Activated B cell treated with CpG ODN at 0.5 μM for 24 hours (primary cell): ENCODE measurements at regions of chrX and their contacts with region 1.

Region 1: DNA sequence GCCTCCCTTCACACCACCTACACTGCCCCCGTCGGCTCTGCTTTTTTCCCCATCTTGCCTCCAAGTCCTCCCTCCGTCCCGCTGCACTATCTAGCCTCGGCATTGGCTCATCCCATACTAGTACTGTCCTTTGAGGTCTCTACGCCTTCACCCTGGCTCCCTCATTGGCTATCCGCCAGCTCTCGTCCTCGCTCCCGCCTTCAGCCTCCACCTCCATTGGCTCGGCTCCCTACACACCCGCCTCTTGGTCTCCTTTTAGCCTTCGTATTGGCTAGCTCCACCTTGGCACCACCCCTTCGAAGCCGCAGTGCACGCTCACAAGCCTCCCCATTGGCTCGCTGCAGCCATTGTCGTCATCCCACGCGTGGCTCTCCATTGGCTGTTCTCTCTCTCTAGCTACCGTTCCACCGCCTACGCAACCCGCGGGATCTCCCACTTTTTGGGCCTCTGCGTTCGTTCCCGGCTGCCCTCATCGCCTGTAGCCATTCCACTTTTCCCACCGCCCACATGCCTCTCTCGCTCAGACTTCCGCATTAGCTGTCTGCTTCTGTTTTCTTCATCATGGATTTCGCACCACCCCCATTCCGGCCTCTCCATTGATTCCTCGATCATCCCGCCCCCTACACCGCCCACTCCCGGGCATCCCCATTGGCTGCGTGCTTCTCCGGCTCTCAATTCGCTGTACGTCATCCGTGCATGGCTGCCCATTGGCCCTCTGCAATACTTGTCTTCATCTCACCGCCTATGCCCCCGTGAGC is 404 bp upstream of the PPP1R3F start:
- DNase-seq: peak; percentile 76
- ATAC-seq: peak; percentile 86
- H3K4me3 Mint-ChIP-seq: peak overlapping the region; percentile 93
- H3K27ac Mint-ChIP-seq: peak overlapping the region; percentile 99
- H3K4me1 Mint-ChIP-seq: peaks cover 38% of the 10 kb centered on the region
- H3K27me3 Mint-ChIP-seq: no peaks in the 10 kb centered on the region
- CTCF ChIP-seq: no peak

Region 2: DNA sequence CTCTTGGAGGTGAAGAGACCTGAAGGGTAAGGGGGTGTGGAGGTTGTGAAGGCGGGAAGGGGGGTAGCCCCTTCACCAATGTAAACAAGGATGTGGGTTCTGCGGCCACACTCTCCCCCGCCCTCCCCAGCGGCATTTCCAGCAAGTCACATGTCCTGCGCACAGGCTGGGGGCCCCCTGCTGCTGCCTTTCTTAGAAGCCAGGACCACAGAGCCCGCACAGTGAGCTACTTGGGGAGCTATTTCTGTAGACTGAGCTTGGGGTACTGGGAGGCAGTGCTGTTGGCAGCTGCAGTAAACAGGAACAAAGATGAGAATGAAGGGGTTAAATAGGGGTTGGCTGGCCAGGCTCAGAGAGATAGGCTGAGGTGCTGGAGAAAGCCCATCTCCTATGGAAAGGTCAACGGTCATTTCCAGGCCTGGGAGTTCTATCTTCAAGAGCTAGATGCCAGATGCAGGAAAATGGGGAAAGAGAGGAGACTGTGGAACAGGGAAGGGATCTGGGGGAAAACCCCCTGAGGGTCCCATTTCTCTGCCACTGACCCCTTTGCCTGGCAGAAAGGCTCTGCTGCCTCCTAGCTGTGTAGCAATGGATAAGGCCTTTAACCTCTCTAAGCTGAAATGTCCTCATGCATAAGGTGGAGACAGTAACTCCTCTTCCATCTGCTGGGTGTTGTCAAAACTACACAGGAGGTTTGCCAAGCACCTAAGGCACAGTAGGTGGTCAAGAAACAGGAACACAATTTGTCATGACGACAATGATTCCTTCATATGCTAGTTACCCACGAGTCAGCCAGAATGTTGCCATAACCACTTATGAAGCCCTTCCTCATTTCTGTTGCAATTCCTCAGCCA is 331.9 kb before region 1 on chrX:
- CTCF ChIA-PET with region 1: no interaction called
- POLR2A ChIA-PET with region 1: no interaction called
- intact Hi-C with region 1: loop called (anchors 1 kb)
- DNase-seq: peak; percentile 68
- ATAC-seq: peak; percentile 54
- H3K4me3 Mint-ChIP-seq: peak overlapping the region; percentile 77
- H3K27ac Mint-ChIP-seq: peak overlapping the region; percentile 98
- H3K4me1 Mint-ChIP-seq: peaks cover 87% of the 10 kb centered on the region
- H3K27me3 Mint-ChIP-seq: no peaks in the 10 kb centered on the region
- CTCF ChIP-seq: no peak

Region 3: DNA sequence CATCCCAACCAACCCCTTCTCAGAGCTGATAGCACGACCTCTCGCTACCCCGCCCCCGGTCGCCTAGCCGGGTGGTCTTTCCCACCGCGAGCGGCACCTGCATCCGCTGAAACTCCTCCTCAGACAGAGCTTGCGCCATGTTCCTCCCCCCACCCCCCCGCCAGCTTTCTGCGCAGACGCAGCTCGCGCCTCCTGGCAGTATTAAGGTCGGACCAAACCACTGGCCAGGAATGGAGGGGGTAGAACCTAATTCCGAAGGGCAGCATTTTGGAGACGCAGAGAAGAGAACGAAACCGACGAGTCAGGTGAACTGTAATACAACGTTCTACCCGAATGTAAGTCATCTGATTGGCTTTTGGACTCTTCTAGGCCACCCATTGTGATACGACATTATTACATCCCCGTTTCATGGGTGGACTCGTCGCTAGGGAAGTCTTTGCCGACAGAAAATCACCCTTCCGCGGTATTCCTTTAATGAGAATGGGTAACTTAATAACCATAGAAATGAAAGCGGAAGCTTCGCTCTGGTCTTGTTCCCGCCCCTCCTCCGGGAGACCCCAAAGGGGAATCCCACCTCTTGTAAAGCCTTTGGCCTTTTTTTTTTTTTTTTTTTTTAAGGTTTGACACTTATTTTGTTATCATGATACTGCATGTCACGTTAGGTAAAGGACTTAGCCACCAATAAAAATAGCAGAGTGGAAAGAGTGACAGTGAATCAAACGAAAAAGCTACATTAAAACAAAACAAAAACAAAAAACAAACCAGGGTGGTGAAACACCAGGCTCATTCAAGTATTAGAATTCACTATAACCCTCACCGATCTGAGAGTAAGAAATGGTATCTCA is 266.9 kb before region 1 on chrX and contains the start of gene GRIPAP1:
- CTCF ChIA-PET with region 1: no interaction called
- POLR2A ChIA-PET with region 1: no interaction called
- intact Hi-C with region 1: loop called (anchors 1 kb)
- DNase-seq: peak; percentile 52
- ATAC-seq: peak; percentile 88
- H3K4me3 Mint-ChIP-seq: peak within 1 kb of the TSS; percentile 99
- H3K27ac Mint-ChIP-seq: peak within 1 kb of the TSS; percentile 97
- H3K4me1 Mint-ChIP-seq: peaks cover 24% of the 10 kb centered on the region
- H3K27me3 Mint-ChIP-seq: no peaks in the 10 kb centered on the region
- CTCF ChIP-seq: no peak
- total RNA-seq, gene GRIPAP1: 97.3 and 117 TPM in 2 replicates

Region 4: DNA sequence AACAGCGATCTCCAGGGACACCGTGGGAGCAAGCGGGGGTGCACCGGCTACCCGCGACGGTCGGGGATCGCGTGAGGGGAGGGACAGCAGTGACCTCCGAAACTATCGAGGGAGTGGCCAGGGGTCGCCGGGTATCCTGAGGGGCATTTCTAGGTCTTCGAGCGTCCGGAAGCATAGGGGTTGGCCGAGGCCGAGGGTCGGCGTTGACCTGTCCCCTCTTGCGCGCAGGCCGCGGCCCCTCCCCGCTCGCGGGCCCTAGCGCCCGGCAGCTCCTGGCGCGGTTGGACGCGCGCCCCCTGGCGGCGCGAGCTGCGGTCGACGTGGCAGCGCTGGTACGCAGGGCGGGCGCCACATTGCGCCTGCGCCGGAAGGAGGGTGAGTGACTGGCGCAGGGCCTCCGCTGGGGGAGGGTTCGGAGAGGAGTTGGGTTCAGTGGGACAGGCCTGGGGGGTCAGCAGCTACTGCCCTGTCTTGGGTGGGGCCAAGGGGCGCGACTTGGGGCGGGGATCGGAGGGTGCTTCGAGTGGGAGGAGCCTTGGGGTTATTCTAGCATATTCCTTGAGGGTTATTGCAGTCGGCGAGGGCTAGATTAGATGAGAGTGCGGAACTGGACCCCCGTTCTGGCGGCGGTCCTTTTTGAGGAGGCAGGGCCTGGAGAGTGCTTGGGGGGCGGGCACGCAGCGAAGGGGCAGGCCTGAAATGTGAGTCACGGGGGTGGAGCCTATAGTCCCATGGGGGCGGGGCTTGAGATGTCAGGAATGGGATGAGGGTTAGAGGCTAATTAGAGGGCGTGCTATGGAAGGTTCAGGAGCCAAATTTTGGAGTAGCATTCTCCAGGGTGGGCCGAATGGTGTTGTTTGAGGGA is 105.4 kb before region 1 on chrX:
- CTCF ChIA-PET with region 1: no interaction called
- POLR2A ChIA-PET with region 1: interaction called, 23 read pairs
- intact Hi-C with region 1: loop called (anchors 1 kb)
- DNase-seq: peak; percentile 79
- ATAC-seq: peak; percentile 60
- H3K4me3 Mint-ChIP-seq: peak overlapping the region; percentile 83
- H3K27ac Mint-ChIP-seq: peak overlapping the region; percentile 92
- H3K4me1 Mint-ChIP-seq: peaks cover 31% of the 10 kb centered on the region
- H3K27me3 Mint-ChIP-seq: no peaks in the 10 kb centered on the region
- CTCF ChIP-seq: no peak

Region 5: DNA sequence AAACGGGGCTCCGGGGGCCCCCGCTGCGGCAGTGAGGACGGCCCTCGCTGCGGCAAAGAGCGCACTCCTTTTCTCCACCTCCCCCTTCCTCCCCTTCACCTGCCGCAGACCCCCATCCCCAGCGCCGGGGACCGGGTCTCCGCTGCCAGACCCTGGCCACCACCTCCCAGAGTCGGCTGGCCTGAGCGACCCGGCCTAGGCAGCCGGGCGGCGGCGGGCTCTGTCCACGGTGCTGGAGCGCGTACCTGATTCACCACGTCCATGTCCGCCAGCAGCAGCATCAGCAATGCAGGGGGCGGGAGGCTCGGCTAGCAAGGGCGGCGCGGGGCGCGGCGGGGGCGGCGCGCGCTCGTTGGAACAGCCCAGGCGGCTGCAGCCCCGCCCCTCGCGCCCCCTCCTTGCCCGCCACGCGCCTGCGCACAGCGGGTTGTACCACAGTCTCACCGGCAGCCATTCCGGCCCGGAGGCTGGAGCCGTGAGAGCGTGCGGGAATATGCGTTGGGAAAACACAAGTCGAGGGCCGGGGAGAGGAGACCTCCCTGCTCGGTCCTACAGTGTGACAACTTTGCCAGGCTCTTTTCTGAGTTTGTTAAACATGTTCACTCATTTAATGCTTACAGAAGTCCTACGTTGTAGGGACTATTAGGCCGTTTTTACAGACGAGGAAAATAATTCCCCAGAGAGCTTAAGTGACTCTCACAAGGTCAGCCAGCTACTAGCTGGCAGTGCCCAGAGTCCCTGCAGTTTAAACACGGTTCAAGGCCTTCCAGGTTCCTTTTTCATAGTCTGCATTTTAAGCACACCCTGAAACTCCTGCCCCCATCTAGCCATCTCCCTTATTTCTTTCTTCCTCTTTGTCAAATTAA is 69.0 kb before region 1 on chrX and contains the start of gene SYP:
- CTCF ChIA-PET with region 1: no interaction called
- POLR2A ChIA-PET with region 1: interaction called, 3 read pairs
- intact Hi-C with region 1: loop called (anchors 2 kb)
- DNase-seq: peak; percentile 83
- ATAC-seq: peak; percentile 99
- H3K4me3 Mint-ChIP-seq: peak within 1 kb of the TSS; percentile 75
- H3K27ac Mint-ChIP-seq: peak within 1 kb of the TSS; percentile 53
- H3K4me1 Mint-ChIP-seq: peaks cover 9% of the 10 kb centered on the region
- H3K27me3 Mint-ChIP-seq: no peaks in the 10 kb centered on the region
- CTCF ChIP-seq: no peak
- total RNA-seq, gene SYP: 0.82 and 1.6 TPM in 2 replicates

Region 6: GRCh38 chrX:49214996-49215526 is 54.1 kb before region 1 on chrX:
- CTCF ChIA-PET with region 1: no interaction called
- POLR2A ChIA-PET with region 1: no interaction called
- intact Hi-C with region 1: no loop called
- DNase-seq: no peak
- ATAC-seq: no peak
- H3K4me3 Mint-ChIP-seq: no peak overlapping the region
- H3K27ac Mint-ChIP-seq: no peak overlapping the region
- H3K4me1 Mint-ChIP-seq: no peaks in the 10 kb centered on the region
- H3K27me3 Mint-ChIP-seq: no peaks in the 10 kb centered on the region
- CTCF ChIP-seq: no peak

Region 7: GRCh38 chrX:49230469-49231232 is 38.5 kb before region 1 on chrX:
- CTCF ChIA-PET with region 1: no interaction called
- POLR2A ChIA-PET with region 1: interaction called, 8 read pairs
- intact Hi-C with region 1: loop called (anchors 1 kb)
- DNase-seq: peak; percentile 54
- ATAC-seq: peak; percentile 78
- H3K4me3 Mint-ChIP-seq: peak overlapping the region; percentile 85
- H3K27ac Mint-ChIP-seq: peak overlapping the region; percentile 95
- H3K4me1 Mint-ChIP-seq: peaks cover 18% of the 10 kb centered on the region
- H3K27me3 Mint-ChIP-seq: no peaks in the 10 kb centered on the region
- CTCF ChIP-seq: no peak

Region 8: DNA sequence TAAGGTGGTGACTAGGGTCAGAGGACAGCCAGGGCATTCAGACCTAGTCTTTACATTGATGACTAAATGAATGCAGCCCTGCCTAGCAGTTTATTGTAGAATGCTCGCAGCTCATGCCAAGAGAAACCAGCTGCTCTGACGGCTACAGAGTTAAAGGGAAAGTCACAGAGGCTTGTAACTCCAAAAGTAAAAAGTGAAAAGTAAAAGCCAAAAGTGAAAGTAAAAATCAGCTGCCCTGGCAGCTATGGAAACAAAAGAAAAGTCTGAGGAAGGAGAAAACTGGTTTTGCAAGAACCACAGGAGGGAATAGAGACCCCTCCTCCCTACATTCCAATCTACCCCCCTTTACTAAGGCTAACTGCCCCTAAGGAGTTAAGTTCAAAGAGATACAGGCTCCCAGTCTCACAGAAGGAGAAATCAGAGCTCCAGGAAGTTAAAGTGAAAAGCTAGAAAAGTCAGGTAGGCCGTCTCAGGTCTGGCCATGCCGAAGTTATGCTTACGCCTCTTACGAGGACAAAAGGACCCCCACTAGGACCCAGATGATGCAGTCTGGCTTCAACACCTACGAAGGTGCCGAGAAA is 40.3 kb after region 1 on chrX:
- CTCF ChIA-PET with region 1: no interaction called
- POLR2A ChIA-PET with region 1: interaction called, 7 read pairs
- intact Hi-C with region 1: loop called (anchors 1 kb)
- DNase-seq: no peak
- ATAC-seq: peak; percentile 40
- H3K4me3 Mint-ChIP-seq: peak overlapping the region; percentile 80
- H3K27ac Mint-ChIP-seq: peak overlapping the region; percentile 91
- H3K4me1 Mint-ChIP-seq: peaks cover 18% of the 10 kb centered on the region
- H3K27me3 Mint-ChIP-seq: no peaks in the 10 kb centered on the region
- CTCF ChIP-seq: no peak